ENCODE measurements at regions of chr7 and their contacts with region 1.

Region 1: DNA sequence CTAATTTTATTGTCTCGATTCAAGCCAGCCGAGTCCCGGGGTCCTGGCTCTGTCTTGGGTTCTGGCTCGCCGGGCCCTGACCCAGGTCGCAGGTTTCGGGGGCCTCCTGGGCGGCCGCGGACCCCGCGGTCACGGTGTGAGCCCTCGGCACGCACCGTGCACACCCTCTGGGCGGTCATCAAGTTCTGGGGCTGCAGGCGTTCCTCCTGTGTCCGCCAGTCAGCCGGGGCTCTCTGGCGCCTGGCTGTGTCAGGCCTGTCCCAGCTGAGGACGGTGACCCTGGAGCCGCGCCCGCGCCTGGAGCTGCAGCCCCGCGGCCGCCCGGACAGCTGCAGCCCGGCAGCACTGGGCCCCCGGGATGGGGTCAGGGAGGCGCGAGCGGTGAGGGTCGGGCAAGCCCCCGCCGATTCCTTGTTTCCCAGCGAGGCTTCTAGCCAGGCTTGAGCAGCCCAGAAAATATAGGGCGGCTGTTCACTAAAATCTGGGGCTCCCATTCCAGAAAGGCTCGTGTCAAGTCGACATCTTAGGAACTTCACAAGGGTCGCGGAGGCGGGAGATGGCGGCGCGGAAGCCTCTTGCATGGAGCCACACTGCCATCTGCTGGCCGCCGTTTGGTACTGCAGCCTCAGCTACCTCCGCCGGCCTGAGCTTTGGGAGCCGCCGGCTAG is 4.2 kb upstream of the HOXA7 start:
- DNase-seq: peak; percentile 87
- H3K4me3 Mint-ChIP-seq: peak overlapping the region; percentile 57
- H3K27ac Mint-ChIP-seq: no peak overlapping the region
- H3K4me1 Mint-ChIP-seq: peaks cover 35% of the 10 kb centered on the region
- H3K27me3 Mint-ChIP-seq: peaks cover 77% of the 10 kb centered on the region

Region 2: GRCh38 chr7:25521236-25521635 is 1639.4 kb before region 1 on chr7:
- CTCF ChIA-PET with region 1: no interaction called
- intact Hi-C with region 1: no loop called
- DNase-seq: peak; percentile 22
- H3K4me3 Mint-ChIP-seq: no peak overlapping the region
- H3K27ac Mint-ChIP-seq: peak overlapping the region; percentile 44
- H3K4me1 Mint-ChIP-seq: peaks cover 45% of the 10 kb centered on the region
- H3K27me3 Mint-ChIP-seq: no peaks in the 10 kb centered on the region

Region 3: GRCh38 chr7:25851332-25852210 is 1309.1 kb before region 1 on chr7:
- CTCF ChIA-PET with region 1: no interaction called
- intact Hi-C with region 1: no loop called
- DNase-seq: peak; percentile 85
- H3K4me3 Mint-ChIP-seq: peak overlapping the region; percentile 51
- H3K27ac Mint-ChIP-seq: no peak overlapping the region
- H3K4me1 Mint-ChIP-seq: peaks cover 19% of the 10 kb centered on the region
- H3K27me3 Mint-ChIP-seq: peaks cover 37% of the 10 kb centered on the region

Region 4: DNA sequence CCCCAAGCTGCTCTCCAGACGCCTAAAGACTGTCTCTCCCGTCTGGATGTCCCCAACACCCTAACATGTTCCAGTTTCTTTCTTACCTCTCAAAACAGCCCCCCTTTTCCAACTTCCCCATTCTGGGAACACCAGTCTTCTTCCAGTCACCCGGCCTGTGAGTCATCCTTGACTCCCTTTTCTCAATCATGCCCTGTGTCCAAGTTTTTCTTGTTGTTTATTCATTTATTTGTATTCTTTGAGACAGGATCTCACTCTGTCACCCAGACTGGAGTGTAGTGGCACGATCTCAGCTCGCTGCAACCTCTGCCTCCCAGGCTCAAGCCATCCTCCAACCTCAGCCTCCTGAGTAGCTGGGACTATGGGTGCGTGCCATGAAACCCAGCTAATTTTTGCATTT is 853.5 kb before region 1 on chr7:
- CTCF ChIA-PET with region 1: no interaction called
- intact Hi-C with region 1: no loop called
- DNase-seq: no peak
- H3K4me3 Mint-ChIP-seq: no peak overlapping the region
- H3K27ac Mint-ChIP-seq: no peak overlapping the region
- H3K4me1 Mint-ChIP-seq: peaks cover 14% of the 10 kb centered on the region
- H3K27me3 Mint-ChIP-seq: no peaks in the 10 kb centered on the region

Region 5: DNA sequence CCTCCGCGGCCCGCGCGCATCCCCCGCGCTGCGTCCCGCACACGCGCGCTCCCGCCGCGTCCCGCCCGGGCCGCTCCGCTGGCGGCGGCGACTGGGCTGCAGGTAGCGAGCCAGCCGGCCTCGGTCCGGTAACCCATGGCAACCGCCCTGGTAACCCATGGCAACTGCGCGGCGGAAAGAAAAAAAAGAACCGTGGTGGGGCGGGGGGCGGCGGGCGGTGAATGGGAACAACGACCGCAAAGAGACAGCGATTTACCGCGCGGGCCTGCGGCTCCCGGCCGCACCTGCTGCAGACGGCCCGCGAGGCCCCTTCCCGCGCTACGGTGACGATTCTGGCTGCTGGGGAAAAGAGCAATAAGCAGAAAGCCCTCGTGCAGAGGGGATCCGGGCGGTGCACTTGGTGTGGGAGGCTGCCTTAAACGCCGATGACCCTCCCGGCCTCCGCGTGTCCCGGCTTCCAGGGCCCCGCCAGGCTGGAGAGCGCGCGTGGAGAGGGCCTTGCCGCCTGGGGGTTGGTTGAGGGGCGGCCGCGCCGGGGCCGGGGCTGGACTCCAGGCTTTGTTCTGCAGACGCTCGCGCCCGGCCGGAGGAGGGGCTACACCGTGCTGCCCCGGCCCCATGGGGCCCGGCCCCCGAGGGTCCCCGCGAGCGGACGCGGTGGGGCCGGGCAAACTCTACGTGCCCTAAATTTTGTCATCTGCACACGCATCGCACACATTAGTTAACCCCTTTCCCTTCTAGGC is 784.3 kb before region 1 on chr7:
- CTCF ChIA-PET with region 1: interaction called, 5 read pairs
- intact Hi-C with region 1: loop called (anchors 2 kb)
- DNase-seq: peak; percentile 60
- H3K4me3 Mint-ChIP-seq: peak overlapping the region; percentile 78
- H3K27ac Mint-ChIP-seq: no peak overlapping the region
- H3K4me1 Mint-ChIP-seq: no peaks in the 10 kb centered on the region
- H3K27me3 Mint-ChIP-seq: peaks cover 36% of the 10 kb centered on the region

Region 6: GRCh38 chr7:26667500-26668133 is 493.1 kb before region 1 on chr7:
- CTCF ChIA-PET with region 1: interaction called, 4 read pairs
- intact Hi-C with region 1: loop called (anchors 5 kb)
- DNase-seq: peak; percentile 78
- H3K4me3 Mint-ChIP-seq: no peak overlapping the region
- H3K27ac Mint-ChIP-seq: no peak overlapping the region
- H3K4me1 Mint-ChIP-seq: peaks cover 19% of the 10 kb centered on the region
- H3K27me3 Mint-ChIP-seq: peaks cover 4% of the 10 kb centered on the region

Region 7: GRCh38 chr7:26686448-26686981 is 474.2 kb before region 1 on chr7:
- CTCF ChIA-PET with region 1: interaction called, 4 read pairs
- intact Hi-C with region 1: loop called (anchors 1 kb)
- DNase-seq: peak; percentile 7
- H3K4me3 Mint-ChIP-seq: no peak overlapping the region
- H3K27ac Mint-ChIP-seq: no peak overlapping the region
- H3K4me1 Mint-ChIP-seq: no peaks in the 10 kb centered on the region
- H3K27me3 Mint-ChIP-seq: peaks cover 20% of the 10 kb centered on the region

Region 8: DNA sequence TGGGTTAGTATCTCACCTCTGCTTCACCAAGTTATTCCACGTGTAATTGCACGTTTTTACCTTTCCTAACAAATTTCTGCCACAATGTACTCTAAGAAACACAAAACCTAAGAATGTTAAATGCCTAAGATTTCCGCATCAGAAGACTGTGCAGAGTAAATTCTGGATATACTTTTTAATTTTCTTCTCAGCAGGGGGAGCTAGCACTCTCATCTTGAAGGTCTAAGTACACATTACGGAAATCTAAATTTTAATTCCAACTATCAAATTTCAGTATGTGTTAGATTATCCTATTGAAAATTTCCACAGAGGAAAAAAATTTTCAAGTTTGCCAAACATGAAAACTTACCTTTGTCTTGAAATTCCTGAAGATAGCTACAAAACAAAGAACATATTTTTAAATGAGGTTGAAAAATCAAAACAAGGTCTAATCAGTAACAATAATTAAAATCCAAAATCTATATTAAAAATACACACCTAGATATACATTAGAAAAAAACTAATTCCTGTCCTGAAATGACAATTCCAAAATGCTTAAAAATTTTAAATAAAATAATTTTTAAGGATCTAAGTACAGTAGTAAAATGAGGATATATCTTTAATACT is 306.8 kb before region 1 on chr7:
- CTCF ChIA-PET with region 1: interaction called, 19 read pairs
- intact Hi-C with region 1: loop called (anchors 1 kb)
- DNase-seq: no peak
- H3K4me3 Mint-ChIP-seq: no peak overlapping the region
- H3K27ac Mint-ChIP-seq: no peak overlapping the region
- H3K4me1 Mint-ChIP-seq: peaks cover 3% of the 10 kb centered on the region
- H3K27me3 Mint-ChIP-seq: peaks cover 41% of the 10 kb centered on the region

Region 9: GRCh38 chr7:27179503-27180430 is 19.1 kb after region 1 on chr7:
- CTCF ChIA-PET with region 1: interaction called, 11 read pairs
- intact Hi-C with region 1: no loop called
- DNase-seq: peak; percentile 57
- H3K4me3 Mint-ChIP-seq: peak overlapping the region; percentile 4
- H3K27ac Mint-ChIP-seq: no peak overlapping the region
- H3K4me1 Mint-ChIP-seq: peaks cover 8% of the 10 kb centered on the region
- H3K27me3 Mint-ChIP-seq: peaks cover 72% of the 10 kb centered on the region